Prostate gland (tissue), 2 donors: ENCODE measurements at regions of chr4 and their contacts with region 1.

Region 1: DNA sequence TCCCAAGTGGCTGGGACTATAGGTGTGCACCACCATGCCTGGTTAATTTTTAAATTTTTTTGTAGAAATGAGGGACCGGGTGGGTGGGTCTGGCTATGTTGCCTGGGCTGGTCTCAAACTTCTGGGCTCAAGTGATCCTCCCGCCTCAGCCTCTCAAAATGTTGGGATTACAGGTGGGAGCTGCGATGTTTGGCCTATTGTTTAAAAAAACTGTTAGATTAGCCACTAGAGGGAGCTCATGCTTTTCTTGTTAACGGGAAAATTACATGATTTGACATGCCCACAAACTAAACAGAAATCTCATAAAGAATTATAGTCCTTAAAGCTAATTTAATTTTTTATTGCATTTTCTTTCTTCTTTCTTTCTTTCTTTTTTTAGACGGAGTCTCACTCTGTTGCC is 5.0 kb upstream of the SDAD1 start:
- DNase-seq: no peak
- H3K4me3 ChIP-seq: no peak overlapping the region
- H3K27ac ChIP-seq: no peak overlapping the region
- H3K4me1 ChIP-seq: no peaks in the 10 kb centered on the region
- H3K27me3 ChIP-seq: no peaks in the 10 kb centered on the region
- CTCF ChIP-seq: peak; percentile 66 to 88 (median 78)
- POLR2A ChIP-seq: no peak

Region 2: GRCh38 chr4:76067652-76068286 is 72.0 kb after region 1 on chr4:
- intact Hi-C with region 1: loop called (anchors 1 kb)
- DNase-seq: peak; percentile 79
- H3K4me3 ChIP-seq: no peak overlapping the region
- H3K27ac ChIP-seq: no peak overlapping the region
- H3K4me1 ChIP-seq: no peaks in the 10 kb centered on the region
- H3K27me3 ChIP-seq: no peaks in the 10 kb centered on the region
- CTCF ChIP-seq: peak; percentile 63 to 83 (median 74)
- POLR2A ChIP-seq: no peak

Region 3: GRCh38 chr4:76087007-76087769 is 91.5 kb after region 1 on chr4:
- intact Hi-C with region 1: loop called (anchors 5 kb)
- DNase-seq: peak; percentile 41
- H3K4me3 ChIP-seq: no peak overlapping the region
- H3K27ac ChIP-seq: no peak overlapping the region
- H3K4me1 ChIP-seq: no peaks in the 10 kb centered on the region
- H3K27me3 ChIP-seq: no peaks in the 10 kb centered on the region
- CTCF ChIP-seq: peak in 2 of 4 experiments; percentile 48 to 52
- POLR2A ChIP-seq: no peak

Region 4: GRCh38 chr4:76188557-76188956 is 192.8 kb after region 1 on chr4:
- intact Hi-C with region 1: no loop called
- DNase-seq: no peak
- H3K4me3 ChIP-seq: no peak overlapping the region
- H3K27ac ChIP-seq: peak overlapping the region in 1 of 2 donors; percentile 30
- H3K4me1 ChIP-seq: no peaks in the 10 kb centered on the region
- H3K27me3 ChIP-seq: no peaks in the 10 kb centered on the region
- CTCF ChIP-seq: no peak
- POLR2A ChIP-seq: no peak